CD8-positive, alpha-beta T cell (primary cell): ENCODE measurements at regions of chr4 and their contacts with region 1.

Region 1: GRCh38 chr4:101439926-101440325 is 92.6 kb upstream of the PPP3CA start:
- DNase-seq: no peak
- ATAC-seq: no peak
- H3K4me3 ChIP-seq: no peak overlapping the region
- H3K4me3 Mint-ChIP-seq: no peak overlapping the region
- H3K27ac ChIP-seq: no peak overlapping the region
- H3K27ac Mint-ChIP-seq: no peak overlapping the region
- H3K4me1 ChIP-seq: no peaks in the 10 kb centered on the region
- H3K4me1 Mint-ChIP-seq: no peaks in the 10 kb centered on the region
- H3K27me3 ChIP-seq: no peaks in the 10 kb centered on the region
- H3K27me3 Mint-ChIP-seq: peaks cover 20% of the 10 kb centered on the region
- CTCF ChIP-seq: no peak

Region 2: GRCh38 chr4:101398807-101399206 is 41.1 kb before region 1 on chr4:
- CTCF ChIA-PET with region 1: no interaction called
- POLR2A ChIA-PET with region 1: no interaction called
- intact Hi-C with region 1: loop called in 1 of 2 experiments (anchors 1 kb)
- DNase-seq: no peak
- ATAC-seq: no peak
- H3K4me3 ChIP-seq: no peak overlapping the region
- H3K4me3 Mint-ChIP-seq: no peak overlapping the region
- H3K27ac ChIP-seq: no peak overlapping the region
- H3K27ac Mint-ChIP-seq: no peak overlapping the region
- H3K4me1 ChIP-seq: no peaks in the 10 kb centered on the region
- H3K4me1 Mint-ChIP-seq: peaks cover 3% of the 10 kb centered on the region
- H3K27me3 ChIP-seq: no peaks in the 10 kb centered on the region
- H3K27me3 Mint-ChIP-seq: peaks cover 17% of the 10 kb centered on the region
- CTCF ChIP-seq: no peak